ENCODE measurements at regions of chrX and their contacts with region 1.

Region 1: DNA sequence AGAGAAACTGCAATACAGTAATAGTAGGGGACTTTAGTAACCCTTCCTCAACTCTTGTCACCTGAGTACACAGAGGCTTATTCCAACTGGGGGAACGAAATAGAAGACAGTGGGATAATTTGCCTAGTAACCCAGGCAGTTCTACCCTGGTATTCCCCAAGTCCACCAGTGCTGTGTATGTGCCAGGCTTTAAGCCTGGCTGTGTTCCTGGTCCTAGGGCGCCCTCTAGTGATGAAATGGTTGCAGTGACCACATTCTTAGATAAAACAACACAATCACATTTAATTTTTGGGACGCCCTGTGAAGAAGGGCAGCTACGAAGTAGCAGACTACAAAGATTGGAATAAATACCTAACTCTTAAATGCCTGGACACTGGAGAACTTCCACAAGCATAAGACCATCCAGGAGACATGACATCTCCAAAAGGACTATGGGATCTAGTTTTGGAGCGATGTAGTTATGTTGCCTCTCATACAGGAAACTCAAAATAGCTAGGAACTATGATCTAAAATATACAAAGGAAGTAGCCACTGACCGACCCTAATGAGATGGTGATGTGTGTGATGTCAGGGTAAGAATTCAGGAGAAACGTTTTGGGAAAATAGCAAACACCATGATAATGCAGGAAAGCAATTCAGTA is 288.5 kb upstream of the ZCCHC13 start:
- DNase-seq: peak; percentile 28 to 81
- ATAC-seq: peak; percentile 64 to 95 (median 79)
- H3K4me3 ChIP-seq: no peak overlapping the region
- H3K4me3 Mint-ChIP-seq: no peak overlapping the region
- H3K27ac ChIP-seq: no peak overlapping the region
- H3K27ac Mint-ChIP-seq: no peak overlapping the region
- H3K4me1 ChIP-seq: no peaks in the 10 kb centered on the region
- H3K4me1 Mint-ChIP-seq: no peaks in the 10 kb centered on the region
- H3K27me3 ChIP-seq: no peaks in the 10 kb centered on the region
- H3K27me3 Mint-ChIP-seq: peaks cover 0 to 3% of the 10 kb centered on the region in 2 donors
- CTCF ChIP-seq: peak; percentile 66

Region 2: GRCh38 chrX:72245461-72246089 is 1769.9 kb before region 1 on chrX:
- intact Hi-C with region 1: loop called (anchors 10 kb)
- DNase-seq: peak; percentile 15 to 56
- ATAC-seq: peak in 1 of 3 donors; percentile 61
- H3K4me3 ChIP-seq: no peak overlapping the region
- H3K4me3 Mint-ChIP-seq: no peak overlapping the region
- H3K27ac ChIP-seq: no peak overlapping the region
- H3K27ac Mint-ChIP-seq: no peak overlapping the region
- H3K4me1 ChIP-seq: no peaks in the 10 kb centered on the region
- H3K4me1 Mint-ChIP-seq: no peaks in the 10 kb centered on the region
- H3K27me3 ChIP-seq: no peaks in the 10 kb centered on the region
- H3K27me3 Mint-ChIP-seq: no peaks in the 10 kb centered on the region
- CTCF ChIP-seq: peak; percentile 59

Region 3: GRCh38 chrX:73785493-73785892 is 230.0 kb before region 1 on chrX:
- intact Hi-C with region 1: no loop called
- DNase-seq: no peak
- ATAC-seq: no peak
- H3K4me3 ChIP-seq: no peak overlapping the region
- H3K4me3 Mint-ChIP-seq: no peak overlapping the region
- H3K27ac ChIP-seq: no peak overlapping the region
- H3K27ac Mint-ChIP-seq: no peak overlapping the region
- H3K4me1 ChIP-seq: no peaks in the 10 kb centered on the region
- H3K4me1 Mint-ChIP-seq: no peaks in the 10 kb centered on the region
- H3K27me3 ChIP-seq: no peaks in the 10 kb centered on the region
- H3K27me3 Mint-ChIP-seq: peaks cover 0 to 21% of the 10 kb centered on the region in 2 donors
- CTCF ChIP-seq: no peak

Region 4: GRCh38 chrX:73855546-73855945 is 160.0 kb before region 1 on chrX:
- intact Hi-C with region 1: loop called (anchors 1 kb)
- DNase-seq: peak; percentile 27 to 76
- ATAC-seq: peak in 2 of 3 donors; percentile 52
- H3K4me3 ChIP-seq: no peak overlapping the region
- H3K4me3 Mint-ChIP-seq: no peak overlapping the region
- H3K27ac ChIP-seq: no peak overlapping the region
- H3K27ac Mint-ChIP-seq: no peak overlapping the region
- H3K4me1 ChIP-seq: no peaks in the 10 kb centered on the region
- H3K4me1 Mint-ChIP-seq: peaks cover 0 to 6% of the 10 kb centered on the region in 2 donors
- H3K27me3 ChIP-seq: no peaks in the 10 kb centered on the region
- H3K27me3 Mint-ChIP-seq: peaks cover 0 to 6% of the 10 kb centered on the region in 2 donors
- CTCF ChIP-seq: peak; percentile 54

Region 5: GRCh38 chrX:74133156-74133796 is 117.8 kb after region 1 on chrX:
- intact Hi-C with region 1: loop called (anchors 10 kb)
- DNase-seq: peak in 1 of 2 donors; percentile 67
- ATAC-seq: peak; percentile 57 to 80 (median 62)
- H3K4me3 ChIP-seq: no peak overlapping the region
- H3K4me3 Mint-ChIP-seq: no peak overlapping the region
- H3K27ac ChIP-seq: no peak overlapping the region
- H3K27ac Mint-ChIP-seq: no peak overlapping the region
- H3K4me1 ChIP-seq: no peaks in the 10 kb centered on the region
- H3K4me1 Mint-ChIP-seq: no peaks in the 10 kb centered on the region
- H3K27me3 ChIP-seq: no peaks in the 10 kb centered on the region
- H3K27me3 Mint-ChIP-seq: peaks cover 0 to 17% of the 10 kb centered on the region in 2 donors
- CTCF ChIP-seq: peak; percentile 51

Region 6: DNA sequence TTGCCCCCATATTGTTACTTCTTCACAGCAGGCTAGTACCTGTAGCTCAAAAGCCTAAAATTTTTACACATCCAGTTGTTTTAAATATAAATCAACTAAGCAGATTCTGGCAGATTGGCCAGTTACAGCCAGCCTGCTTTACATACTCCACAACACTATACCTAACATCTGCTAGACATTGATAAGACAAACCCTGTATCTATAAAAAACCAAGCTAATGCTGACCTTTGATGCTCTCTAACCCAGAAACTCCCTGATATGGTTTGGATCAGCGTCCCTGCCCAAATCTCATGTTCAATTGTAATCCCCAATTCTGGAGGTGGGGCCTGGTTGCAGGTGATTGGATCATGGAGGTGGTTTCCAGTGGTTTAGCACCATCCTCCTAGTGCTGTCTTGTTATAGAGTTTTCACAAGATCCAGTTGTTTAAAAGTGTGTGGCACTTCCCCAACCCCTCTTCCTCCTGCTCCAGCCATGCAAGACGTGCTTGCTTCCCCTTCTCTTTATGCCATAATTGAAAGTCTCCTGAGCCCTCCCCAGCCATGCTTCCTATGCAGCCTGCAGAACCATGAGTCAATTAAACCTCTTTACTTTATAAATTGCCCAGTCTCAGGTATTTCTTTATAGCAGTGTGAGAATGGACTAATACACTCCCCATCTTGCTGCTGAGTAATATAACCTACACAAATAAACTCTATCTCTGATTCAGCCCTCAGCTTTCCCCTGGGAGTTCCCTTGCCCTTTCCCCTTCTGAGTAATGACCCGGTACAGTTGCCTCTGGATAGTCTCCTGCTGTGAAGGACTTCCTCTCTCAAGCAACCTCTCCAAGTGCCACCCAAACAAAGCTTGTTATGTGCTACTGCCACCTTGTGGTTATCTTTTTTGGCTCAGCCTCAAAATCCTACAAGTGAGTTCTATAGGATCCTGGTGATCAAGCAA is 328.1 kb after region 1 on chrX:
- intact Hi-C with region 1: loop called (anchors 10 kb)
- DNase-seq: peak in 1 of 2 donors; percentile 72
- ATAC-seq: peak; percentile 49 to 73 (median 49)
- H3K4me3 ChIP-seq: no peak overlapping the region
- H3K4me3 Mint-ChIP-seq: no peak overlapping the region
- H3K27ac ChIP-seq: no peak overlapping the region
- H3K27ac Mint-ChIP-seq: no peak overlapping the region
- H3K4me1 ChIP-seq: no peaks in the 10 kb centered on the region
- H3K4me1 Mint-ChIP-seq: peaks cover 0 to 6% of the 10 kb centered on the region in 2 donors
- H3K27me3 ChIP-seq: no peaks in the 10 kb centered on the region
- H3K27me3 Mint-ChIP-seq: peaks cover 7 to 31% of the 10 kb centered on the region in 2 donors
- CTCF ChIP-seq: peak; percentile 53

Measured in natural killer cell (primary cell).